OCI-LY7 (cell line): ENCODE measurements at regions of chr12 and their contacts with region 1.

Region 1: GRCh38 chr12:12334367-12335040 is 15.5 kb downstream of the MANSC1 start:
- DNase-seq: peak; percentile 76
- H3K4me3 ChIP-seq: no peak overlapping the region
- H3K27ac ChIP-seq: no peak overlapping the region
- H3K4me1 ChIP-seq: no peaks in the 10 kb centered on the region
- CTCF ChIP-seq: peak; percentile 96

Region 2: GRCh38 chr12:11576104-11576503 is 758.4 kb before region 1 on chr12:
- CTCF ChIA-PET with region 1: no interaction called
- POLR2A ChIA-PET with region 1: no interaction called
- intact Hi-C with region 1: loop called (anchors 10 kb)
- DNase-seq: no peak
- H3K4me3 ChIP-seq: no peak overlapping the region
- H3K27ac ChIP-seq: no peak overlapping the region
- H3K4me1 ChIP-seq: peaks cover 29% of the 10 kb centered on the region
- CTCF ChIP-seq: no peak

Region 3: DNA sequence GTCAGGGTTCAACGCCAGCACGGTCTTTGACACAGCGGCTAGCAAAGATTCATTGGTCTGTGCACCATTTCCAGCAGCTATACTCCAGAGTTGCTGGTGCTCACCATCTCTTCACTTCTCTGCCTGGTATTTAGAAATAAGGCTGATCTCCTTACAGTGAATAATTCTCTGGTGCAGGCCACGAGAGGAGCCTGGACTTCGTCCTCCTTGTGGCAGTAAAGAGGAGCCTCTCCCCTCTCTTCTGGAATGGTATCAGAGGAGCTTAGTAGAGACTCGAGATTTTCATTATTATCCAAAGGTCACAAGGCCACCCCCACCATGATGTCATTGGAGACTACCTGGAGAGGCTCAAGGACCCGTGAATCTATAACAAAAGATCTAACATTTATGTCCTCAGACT is 294.6 kb before region 1 on chr12:
- CTCF ChIA-PET with region 1: no interaction called
- POLR2A ChIA-PET with region 1: no interaction called
- intact Hi-C with region 1: loop called (anchors 5 kb)
- DNase-seq: no peak
- H3K4me3 ChIP-seq: no peak overlapping the region
- H3K27ac ChIP-seq: no peak overlapping the region
- H3K4me1 ChIP-seq: no peaks in the 10 kb centered on the region
- CTCF ChIP-seq: no peak

Region 4: GRCh38 chr12:12081836-12082497 is 252.5 kb before region 1 on chr12:
- CTCF ChIA-PET with region 1: no interaction called
- POLR2A ChIA-PET with region 1: interaction called, 3 read pairs
- intact Hi-C with region 1: loop called (anchors 2 kb)
- DNase-seq: peak; percentile 48
- H3K4me3 ChIP-seq: no peak overlapping the region
- H3K27ac ChIP-seq: no peak overlapping the region
- H3K4me1 ChIP-seq: no peaks in the 10 kb centered on the region
- CTCF ChIP-seq: peak; percentile 70

Region 5: GRCh38 chr12:12294215-12295005 is 40.1 kb before region 1 on chr12:
- CTCF ChIA-PET with region 1: no interaction called
- POLR2A ChIA-PET with region 1: no interaction called
- intact Hi-C with region 1: no loop called
- DNase-seq: no peak
- H3K4me3 ChIP-seq: no peak overlapping the region
- H3K27ac ChIP-seq: no peak overlapping the region
- H3K4me1 ChIP-seq: no peaks in the 10 kb centered on the region
- CTCF ChIP-seq: no peak

Region 6: DNA sequence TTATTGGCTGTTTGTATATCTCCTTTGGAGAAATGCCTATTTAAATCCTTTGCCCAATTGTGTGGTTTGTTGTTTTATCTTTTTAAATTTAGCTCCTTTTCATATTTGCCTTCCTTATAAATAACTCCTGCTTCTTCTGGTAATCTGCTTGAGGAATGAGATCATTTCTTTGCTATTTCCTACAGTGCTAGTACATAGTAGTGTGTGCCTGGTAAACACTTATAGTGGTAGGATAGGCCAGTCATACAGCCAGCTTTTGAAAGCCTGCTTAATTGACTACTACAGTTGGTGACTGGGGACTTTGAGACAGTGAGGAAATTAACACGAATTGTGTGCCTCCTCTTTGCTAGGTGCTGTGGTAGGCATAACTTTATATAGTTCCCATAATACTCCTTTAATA is 91.1 kb after region 1 on chr12:
- CTCF ChIA-PET with region 1: no interaction called
- POLR2A ChIA-PET with region 1: no interaction called
- intact Hi-C with region 1: no loop called
- DNase-seq: no peak
- H3K4me3 ChIP-seq: no peak overlapping the region
- H3K27ac ChIP-seq: no peak overlapping the region
- H3K4me1 ChIP-seq: no peaks in the 10 kb centered on the region
- CTCF ChIP-seq: no peak